Adrenal gland (tissue), 19 donors: ENCODE measurements at regions of chr11 and their contacts with region 1.

Region 1: DNA sequence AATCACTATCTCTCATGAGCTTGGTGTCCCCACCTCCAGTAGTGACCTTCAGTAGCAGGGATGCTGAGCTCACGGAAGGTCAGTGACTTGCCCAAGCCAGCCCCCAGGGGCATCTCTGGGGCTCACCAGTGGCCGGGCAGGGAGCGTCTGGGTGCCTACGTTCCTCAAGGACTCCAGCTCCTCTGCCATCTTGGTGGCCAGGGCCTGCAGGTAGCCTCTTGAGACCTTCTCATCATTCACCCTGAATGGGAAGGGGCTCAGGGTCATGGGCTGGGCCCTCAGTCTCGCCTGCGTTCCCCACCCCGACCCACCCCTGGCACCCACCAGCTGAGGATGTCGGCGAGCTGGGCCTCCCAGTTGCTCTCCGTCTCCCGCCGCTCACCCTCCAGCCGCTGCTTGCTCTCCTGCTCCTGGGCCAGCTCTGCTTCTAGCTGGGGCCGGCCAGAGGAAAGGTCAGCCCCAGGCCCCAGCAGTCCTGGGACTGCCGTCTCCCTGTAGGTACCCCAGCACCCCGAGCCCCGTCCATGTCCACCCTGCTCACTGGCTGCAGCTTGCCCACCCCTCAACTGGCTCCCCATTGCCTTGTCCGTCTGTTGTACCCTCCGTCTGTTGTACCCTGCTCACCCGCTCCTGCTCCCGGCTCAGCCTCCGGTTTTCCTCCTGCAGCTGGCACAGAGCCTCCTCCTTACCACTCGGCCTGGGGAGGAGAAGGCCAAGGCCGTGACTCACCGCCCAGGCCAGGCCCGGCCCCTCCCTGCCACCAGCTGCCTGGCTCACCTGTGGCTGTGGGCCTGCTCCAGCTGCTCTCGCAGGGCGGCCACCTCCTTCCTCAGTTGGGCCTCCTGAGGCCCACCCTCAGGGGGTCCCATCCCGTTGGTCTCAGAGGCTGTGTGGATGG is 9.5 kb downstream of the CDC42BPG start:
- DNase-seq: peak; percentile 75 to 90 (median 88)
- H3K4me3 ChIP-seq: no peak overlapping the region
- H3K27ac ChIP-seq: peak overlapping the region in 3 of 5 donors; percentile 11 to 77 (median 54)
- H3K4me1 ChIP-seq: peaks cover 5 to 11% of the 10 kb centered on the region in 2 donors
- H3K27me3 ChIP-seq: no peaks in the 10 kb centered on the region
- CTCF ChIP-seq: no peak
- POLR2A ChIP-seq: no peak

Region 2: GRCh38 chr11:64787526-64788320 is 47.2 kb before region 1 on chr11:
- intact Hi-C with region 1: loop called in 1 of 2 experiments (anchors 10 kb)
- DNase-seq: peak in 6 of 7 donors; percentile 64 to 83 (median 79)
- H3K4me3 ChIP-seq: no peak overlapping the region
- H3K27ac ChIP-seq: no peak overlapping the region
- H3K4me1 ChIP-seq: no peaks in the 10 kb centered on the region
- H3K27me3 ChIP-seq: no peaks in the 10 kb centered on the region
- CTCF ChIP-seq: peak; percentile 51 to 72 (median 64)
- POLR2A ChIP-seq: no peak